ENCODE measurements at regions of chr22 and their contacts with region 1.

Region 1: GRCh38 chr22:23786752-23787599 is at the start of gene SMARCB1:
- DNase-seq: peak; percentile 94
- ATAC-seq: peak; percentile 71
- H3K4me3 Mint-ChIP-seq: peak within 1 kb of the TSS; percentile 92
- H3K27ac Mint-ChIP-seq: peak within 1 kb of the TSS; percentile 99
- H3K4me1 Mint-ChIP-seq: peaks cover 41% of the 10 kb centered on the region
- H3K27me3 Mint-ChIP-seq: no peaks in the 10 kb centered on the region
- total RNA-seq, gene SMARCB1: 81.2 to 82.8 TPM

Region 2: GRCh38 chr22:23767673-23768548 is 19.1 kb before region 1 on chr22 and contains the start of gene CHCHD10:
- POLR2A ChIA-PET with region 1: interaction called, 10 read pairs
- DNase-seq: peak; percentile 91
- ATAC-seq: peak; percentile 49
- H3K4me3 Mint-ChIP-seq: peak within 1 kb of the TSS; percentile 87
- H3K27ac Mint-ChIP-seq: peak within 1 kb of the TSS; percentile 81
- H3K4me1 Mint-ChIP-seq: peaks cover 34% of the 10 kb centered on the region
- H3K27me3 Mint-ChIP-seq: peaks cover under 1% of the 10 kb centered on the region
- total RNA-seq, gene CHCHD10: 99.8 to 111 TPM

Region 3: GRCh38 chr22:23820748-23821211 is 33.8 kb after region 1 on chr22:
- POLR2A ChIA-PET with region 1: interaction called, 18 read pairs
- DNase-seq: peak; percentile 73
- ATAC-seq: peak; percentile 96
- H3K4me3 Mint-ChIP-seq: peak overlapping the region; percentile 75
- H3K27ac Mint-ChIP-seq: peak overlapping the region; percentile 97
- H3K4me1 Mint-ChIP-seq: peaks cover 34% of the 10 kb centered on the region
- H3K27me3 Mint-ChIP-seq: no peaks in the 10 kb centered on the region